Cardiac septum (tissue), 1 donor: ENCODE measurements at regions of chr2 and their contacts with region 1.

Region 1: GRCh38 chr2:41947701-41948396 is 100.0 kb upstream of the PKDCC start:
- DNase-seq: no peak

Region 2: DNA sequence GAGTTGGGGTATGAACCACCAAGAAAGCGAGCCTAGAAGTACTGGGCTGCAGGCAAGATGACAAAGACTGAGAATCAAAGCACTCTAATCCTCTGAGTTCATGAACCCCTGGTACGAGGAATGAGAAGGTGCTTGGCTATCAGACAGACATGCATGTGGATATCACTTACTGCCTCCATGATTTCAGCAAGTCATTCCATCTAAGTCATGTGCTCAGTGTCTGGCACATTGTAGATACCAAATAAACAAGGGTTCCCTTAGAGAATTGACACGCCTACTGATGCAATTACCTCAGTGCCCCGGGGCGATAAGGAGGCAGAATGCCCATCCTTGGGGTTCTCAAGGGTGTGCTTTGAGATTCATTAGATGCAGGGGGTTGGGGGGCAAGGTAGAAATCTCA is 25.7 kb before region 1 on chr2:
- intact Hi-C with region 1: loop called (anchors 2 kb)
- DNase-seq: no peak